ENCODE measurements at regions of chr12 and their contacts with region 1.

Region 1: DNA sequence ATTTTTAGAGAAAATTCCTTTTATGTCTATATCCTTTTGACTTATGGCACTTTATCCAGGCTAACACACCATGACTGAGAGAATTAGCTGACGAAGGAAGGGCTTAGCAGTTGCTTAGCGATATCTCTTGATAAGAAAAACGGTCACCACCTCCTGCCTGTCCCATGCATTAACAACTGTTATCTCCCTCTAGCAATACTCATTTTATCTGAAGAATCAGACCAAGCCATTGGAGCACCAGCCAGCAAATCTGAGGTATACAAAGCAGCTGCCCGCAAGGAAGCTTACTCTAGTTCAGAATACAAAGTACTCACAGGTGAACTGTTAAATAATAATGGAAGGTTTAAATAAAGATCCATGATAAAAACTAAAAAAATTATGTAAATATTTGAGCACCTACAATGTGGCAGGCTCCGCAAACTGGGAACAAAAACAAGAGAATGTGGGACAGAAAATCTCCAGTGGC is 24.3 kb downstream of the PPM1H start:
- DNase-seq: peak; percentile 51 to 85 (median 66)
- ATAC-seq: peak; percentile 80
- H3K4me3 ChIP-seq: no peak overlapping the region
- H3K27ac ChIP-seq: peak overlapping the region; percentile 61; the same call in 2 of the 3 replicates
- H3K4me1 ChIP-seq: peaks cover 24 to 81% of the 10 kb centered on the region in 2 experiments; a peak in 4 of 5 replicates
- H3K27me3 ChIP-seq: no peaks in the 10 kb centered on the region
- CTCF ChIP-seq: no peak
- EP300 ChIP-seq: peak; percentile 100
- POLR2A ChIP-seq: no peak
- RAD21 ChIP-seq: no peak

Region 2: DNA sequence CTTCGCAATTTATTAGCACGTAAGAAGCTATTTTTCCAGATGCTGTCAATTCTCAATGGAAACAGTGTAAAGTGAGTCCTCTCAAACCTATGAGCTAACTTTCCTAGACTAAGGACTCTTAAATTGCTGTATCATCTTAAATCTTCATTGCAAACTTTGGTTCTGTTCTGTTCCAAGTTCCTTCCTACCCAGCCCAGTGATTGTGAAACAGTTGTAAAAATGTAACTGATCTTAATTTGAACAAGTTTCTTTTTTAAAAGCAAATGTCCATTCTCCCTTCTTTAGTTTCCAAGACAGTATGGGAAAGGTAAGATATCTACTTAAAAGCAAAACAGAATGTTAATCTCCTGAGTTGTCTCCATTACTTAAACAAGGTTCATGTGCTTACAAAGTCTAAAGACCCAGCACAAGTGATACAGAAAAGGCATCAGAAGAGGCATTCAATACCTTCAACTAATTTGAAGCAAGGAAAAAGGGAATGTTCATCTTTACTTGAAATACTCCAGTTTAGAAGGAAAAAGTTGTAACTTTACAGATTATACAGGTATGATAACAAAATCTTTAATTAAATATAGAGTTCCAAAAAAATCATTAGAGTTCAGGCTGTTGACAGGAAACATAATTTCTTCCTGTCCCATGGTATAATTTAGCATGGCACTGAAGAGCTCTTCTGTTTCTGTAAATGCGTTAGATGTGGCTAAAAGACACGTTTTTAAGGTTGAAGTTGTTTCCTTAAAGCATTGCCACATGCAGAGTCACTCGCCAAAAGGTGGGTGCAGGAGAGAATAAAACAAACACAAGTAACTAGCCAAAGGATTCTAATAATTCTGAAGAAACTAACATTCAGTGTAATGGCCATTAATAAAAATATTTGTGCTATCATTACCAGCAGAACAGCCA is 751.9 kb before region 1 on chr12:
- CTCF ChIA-PET with region 1: no interaction called
- POLR2A ChIA-PET with region 1: no interaction called
- in situ Hi-C with region 1: no loop called
- intact Hi-C with region 1: no loop called
- DNase-seq: no peak
- ATAC-seq: no peak
- H3K4me3 ChIP-seq: no peak overlapping the region
- H3K27ac ChIP-seq: no peak overlapping the region
- H3K4me1 ChIP-seq: no peaks in the 10 kb centered on the region; a peak in 1 of 5 replicates
- H3K27me3 ChIP-seq: no peaks in the 10 kb centered on the region
- CTCF ChIP-seq: no peak
- EP300 ChIP-seq: no peak
- POLR2A ChIP-seq: no peak
- RAD21 ChIP-seq: no peak

Region 3: DNA sequence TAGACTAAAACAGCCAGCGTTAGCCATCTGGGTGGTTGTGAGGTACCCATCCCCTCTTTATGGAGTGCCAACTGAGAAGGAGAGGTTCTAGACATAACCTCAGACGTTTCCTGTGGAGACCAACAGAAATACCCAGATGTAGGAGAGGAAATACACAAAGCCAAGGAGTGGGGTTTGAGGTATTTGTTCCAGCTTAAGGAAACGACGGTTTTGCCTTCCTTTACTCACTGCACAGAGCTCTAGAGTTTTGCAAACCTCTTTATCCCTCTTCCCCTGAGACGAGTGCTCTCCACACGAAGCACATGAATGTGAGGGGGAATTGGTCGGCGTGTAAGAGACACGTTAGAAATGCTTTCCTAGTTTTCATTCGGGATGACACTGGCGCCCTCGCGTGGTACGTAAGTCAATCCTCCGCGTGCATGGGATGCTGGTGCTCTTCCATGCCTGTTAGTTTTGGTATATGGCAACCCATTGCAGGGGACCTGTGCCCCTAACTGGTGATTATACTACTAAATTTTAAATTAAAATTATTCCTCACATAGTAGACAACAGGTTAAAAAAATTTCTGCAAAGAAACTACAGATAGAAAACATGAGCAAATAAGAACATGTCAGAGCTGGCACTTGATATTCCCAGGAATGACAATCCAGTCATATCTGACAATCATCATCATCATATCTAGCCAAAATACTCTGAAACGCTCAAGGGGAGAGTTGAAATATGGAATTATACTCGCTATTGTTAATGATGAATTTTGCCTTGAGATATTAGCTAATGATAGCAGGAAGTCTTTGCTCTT is 97.4 kb before region 1 on chr12:
- CTCF ChIA-PET with region 1: no interaction called
- POLR2A ChIA-PET with region 1: no interaction called
- in situ Hi-C with region 1: no loop called
- intact Hi-C with region 1: loop called (anchors 5 kb)
- DNase-seq: peak; percentile 29 to 65 (median 40)
- ATAC-seq: peak; percentile 81
- H3K4me3 ChIP-seq: no peak overlapping the region
- H3K27ac ChIP-seq: no peak overlapping the region
- H3K4me1 ChIP-seq: peaks cover 0 to 11% of the 10 kb centered on the region in 2 experiments; a peak in 3 of 5 replicates
- H3K27me3 ChIP-seq: no peaks in the 10 kb centered on the region; a peak in 1 of 5 replicates
- CTCF ChIP-seq: peak; percentile 58 to 74 (median 61)
- EP300 ChIP-seq: no peak
- POLR2A ChIP-seq: no peak
- RAD21 ChIP-seq: peak in 1 of 2 experiments; percentile 54; a peak in 3 of 4 replicates

Region 4: GRCh38 chr12:62983599-62984022 is 73.0 kb after region 1 on chr12:
- CTCF ChIA-PET with region 1: no interaction called
- POLR2A ChIA-PET with region 1: no interaction called
- in situ Hi-C with region 1: no loop called
- intact Hi-C with region 1: loop called (anchors 1 kb)
- DNase-seq: peak in 1 of 4 experiments; percentile 56
- ATAC-seq: peak; percentile 85
- H3K4me3 ChIP-seq: no peak overlapping the region
- H3K27ac ChIP-seq: no peak overlapping the region
- H3K4me1 ChIP-seq: no peaks in the 10 kb centered on the region
- H3K27me3 ChIP-seq: no peaks in the 10 kb centered on the region
- CTCF ChIP-seq: peak; percentile 21 to 58 (median 49); a peak in 4 of 6 replicates
- EP300 ChIP-seq: no peak
- POLR2A ChIP-seq: no peak
- RAD21 ChIP-seq: peak; percentile 19 to 51; a peak in 2 of 4 replicates